ENCODE measurements at regions of chr16 and their contacts with region 1.

Region 1: GRCh38 chr16:85554112-85554813 is 58.9 kb upstream of the GSE1 start:
- DNase-seq: peak; percentile 91
- H3K4me3 Mint-ChIP-seq: peak overlapping the region; percentile 91
- H3K27ac Mint-ChIP-seq: peak overlapping the region; percentile 73
- H3K4me1 Mint-ChIP-seq: peaks cover 12% of the 10 kb centered on the region
- H3K27me3 Mint-ChIP-seq: no peaks in the 10 kb centered on the region
- CTCF ChIP-seq: no peak

Region 2: GRCh38 chr16:85369741-85370528 is 184.3 kb before region 1 on chr16:
- CTCF ChIA-PET with region 1: interaction called, 5 read pairs
- POLR2A ChIA-PET with region 1: interaction called, 3 read pairs
- intact Hi-C with region 1: loop called (anchors 1 kb)
- DNase-seq: peak; percentile 76
- H3K4me3 Mint-ChIP-seq: peak overlapping the region; percentile 60
- H3K27ac Mint-ChIP-seq: no peak overlapping the region
- H3K4me1 Mint-ChIP-seq: peaks cover 61% of the 10 kb centered on the region
- H3K27me3 Mint-ChIP-seq: no peaks in the 10 kb centered on the region
- CTCF ChIP-seq: peak; percentile 83

Region 3: DNA sequence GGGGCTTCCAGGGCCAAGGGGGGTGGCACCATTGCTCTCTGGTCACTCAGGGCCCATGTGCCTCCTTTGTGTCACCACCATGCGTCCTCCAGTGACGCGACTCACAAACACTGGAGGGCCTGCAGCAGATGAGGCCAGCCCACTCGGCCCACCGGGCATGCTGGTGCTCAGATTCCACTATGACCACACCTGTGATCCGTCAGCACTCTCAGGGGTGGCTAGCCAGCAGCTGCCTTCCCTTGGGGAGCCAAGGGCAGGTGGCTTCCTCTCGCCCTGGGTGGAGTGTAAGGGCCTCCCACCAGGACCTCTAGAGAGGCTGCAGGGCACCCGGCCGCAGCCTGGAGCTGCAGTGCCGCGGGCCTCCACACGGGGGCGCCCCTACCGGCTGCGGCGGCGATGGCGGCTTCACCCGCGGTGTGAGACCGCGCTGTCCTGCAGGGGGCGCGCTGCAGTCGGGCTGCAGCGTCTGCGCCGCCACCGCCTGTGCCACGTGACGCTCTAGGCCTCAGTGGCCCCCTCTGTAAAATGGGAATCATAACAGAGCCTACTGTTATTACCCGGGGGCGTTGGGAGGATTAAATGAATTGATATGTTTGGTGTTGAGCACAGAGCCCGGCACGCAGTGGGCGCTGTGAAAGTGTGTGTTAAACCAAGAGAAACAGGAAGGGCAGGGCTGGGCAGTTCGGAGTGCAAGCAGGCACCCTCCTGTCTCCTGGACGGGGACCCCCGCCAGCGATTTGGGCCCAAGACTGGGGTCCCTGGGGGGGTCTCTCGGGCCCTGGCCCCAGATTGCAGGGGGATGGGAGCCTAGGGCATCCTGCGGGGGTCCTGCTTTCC is 133.5 kb before region 1 on chr16:
- CTCF ChIA-PET with region 1: interaction called, 8 read pairs
- POLR2A ChIA-PET with region 1: no interaction called
- intact Hi-C with region 1: loop called (anchors 1 kb)
- DNase-seq: peak; percentile 38
- H3K4me3 Mint-ChIP-seq: no peak overlapping the region
- H3K27ac Mint-ChIP-seq: no peak overlapping the region
- H3K4me1 Mint-ChIP-seq: no peaks in the 10 kb centered on the region
- H3K27me3 Mint-ChIP-seq: no peaks in the 10 kb centered on the region
- CTCF ChIP-seq: peak; percentile 99

Region 4: DNA sequence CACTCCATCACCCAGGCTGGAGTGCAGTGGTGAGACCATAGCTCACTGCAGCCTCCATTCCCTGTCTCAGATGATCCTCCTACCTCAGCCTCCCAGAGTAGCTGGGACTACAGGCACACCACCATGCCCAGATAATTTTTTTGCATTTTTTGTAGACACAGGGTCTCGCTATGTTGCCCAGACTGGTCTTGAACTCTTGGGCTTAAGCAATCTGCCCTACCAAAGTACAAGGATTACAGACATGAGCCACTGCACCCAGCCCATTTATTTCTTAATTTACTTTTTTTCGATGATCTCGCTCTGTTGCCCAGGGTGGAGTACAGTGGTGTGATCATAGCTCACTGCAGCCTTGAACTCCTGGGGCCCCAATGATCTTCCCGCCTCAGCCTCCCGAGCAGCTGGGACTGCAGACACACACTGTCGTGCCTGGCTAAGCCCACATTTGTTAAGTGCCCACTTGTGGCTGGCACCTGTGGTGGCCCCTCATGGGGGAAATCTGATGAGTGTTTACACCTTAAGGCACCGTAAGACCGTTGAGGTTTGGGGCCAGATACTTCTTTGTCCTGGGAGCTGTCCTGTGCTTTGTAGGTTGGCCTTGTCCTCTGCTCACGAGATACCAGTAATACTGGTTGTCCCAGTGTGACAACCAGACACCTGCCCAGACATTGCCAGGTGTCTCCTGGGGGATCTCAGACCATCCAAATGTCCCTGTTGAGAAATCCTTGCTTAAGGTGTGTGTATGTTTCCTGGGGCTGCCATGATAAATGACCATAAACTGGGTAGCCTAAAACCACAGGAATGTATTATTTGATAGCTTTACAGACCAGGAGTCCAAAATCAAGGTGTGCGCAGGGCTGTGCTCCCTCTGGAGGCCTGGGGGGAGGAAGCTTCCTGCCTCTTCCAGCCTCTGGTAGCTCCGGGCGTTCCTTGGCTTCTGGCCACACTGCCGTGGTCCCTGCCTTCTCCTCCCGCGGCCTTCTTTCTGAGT is 82.5 kb before region 1 on chr16:
- CTCF ChIA-PET with region 1: no interaction called
- POLR2A ChIA-PET with region 1: no interaction called
- intact Hi-C with region 1: no loop called
- DNase-seq: peak; percentile 24
- H3K4me3 Mint-ChIP-seq: no peak overlapping the region
- H3K27ac Mint-ChIP-seq: no peak overlapping the region
- H3K4me1 Mint-ChIP-seq: peaks cover 6% of the 10 kb centered on the region
- H3K27me3 Mint-ChIP-seq: peaks cover 7% of the 10 kb centered on the region
- CTCF ChIP-seq: no peak

Region 5: GRCh38 chr16:85514595-85515318 is 39.5 kb before region 1 on chr16:
- CTCF ChIA-PET with region 1: interaction called, 12 read pairs
- POLR2A ChIA-PET with region 1: interaction called, 31 read pairs
- intact Hi-C with region 1: loop called (anchors 2 kb)
- DNase-seq: peak; percentile 95
- H3K4me3 Mint-ChIP-seq: peak overlapping the region; percentile 4
- H3K27ac Mint-ChIP-seq: peak overlapping the region; percentile 86
- H3K4me1 Mint-ChIP-seq: peaks cover 17% of the 10 kb centered on the region
- H3K27me3 Mint-ChIP-seq: no peaks in the 10 kb centered on the region
- CTCF ChIP-seq: no peak

Region 6: GRCh38 chr16:85586380-85587104 is 32.3 kb after region 1 on chr16:
- CTCF ChIA-PET with region 1: no interaction called
- POLR2A ChIA-PET with region 1: no interaction called
- intact Hi-C with region 1: no loop called
- DNase-seq: no peak
- H3K4me3 Mint-ChIP-seq: no peak overlapping the region
- H3K27ac Mint-ChIP-seq: no peak overlapping the region
- H3K4me1 Mint-ChIP-seq: no peaks in the 10 kb centered on the region
- H3K27me3 Mint-ChIP-seq: no peaks in the 10 kb centered on the region
- CTCF ChIP-seq: no peak

Region 7: GRCh38 chr16:85615852-85616606 is 61.8 kb after region 1 on chr16:
- CTCF ChIA-PET with region 1: interaction called, 22 read pairs
- POLR2A ChIA-PET with region 1: interaction called, 68 read pairs
- intact Hi-C with region 1: no loop called
- DNase-seq: peak; percentile 57
- H3K4me3 Mint-ChIP-seq: peak overlapping the region; percentile 76
- H3K27ac Mint-ChIP-seq: no peak overlapping the region
- H3K4me1 Mint-ChIP-seq: peaks cover 4% of the 10 kb centered on the region
- H3K27me3 Mint-ChIP-seq: no peaks in the 10 kb centered on the region
- CTCF ChIP-seq: peak; percentile 76